AG04449 (cell line): ENCODE measurements at regions of chrX and their contacts with region 1.

Region 1: GRCh38 chrX:118839334-118839958 is 15.8 kb downstream of the ZCCHC12 start:
- DNase-seq: no peak
- H3K4me3 ChIP-seq: peak overlapping the region; percentile 52
- CTCF ChIP-seq: peak; percentile 74

Region 2: DNA sequence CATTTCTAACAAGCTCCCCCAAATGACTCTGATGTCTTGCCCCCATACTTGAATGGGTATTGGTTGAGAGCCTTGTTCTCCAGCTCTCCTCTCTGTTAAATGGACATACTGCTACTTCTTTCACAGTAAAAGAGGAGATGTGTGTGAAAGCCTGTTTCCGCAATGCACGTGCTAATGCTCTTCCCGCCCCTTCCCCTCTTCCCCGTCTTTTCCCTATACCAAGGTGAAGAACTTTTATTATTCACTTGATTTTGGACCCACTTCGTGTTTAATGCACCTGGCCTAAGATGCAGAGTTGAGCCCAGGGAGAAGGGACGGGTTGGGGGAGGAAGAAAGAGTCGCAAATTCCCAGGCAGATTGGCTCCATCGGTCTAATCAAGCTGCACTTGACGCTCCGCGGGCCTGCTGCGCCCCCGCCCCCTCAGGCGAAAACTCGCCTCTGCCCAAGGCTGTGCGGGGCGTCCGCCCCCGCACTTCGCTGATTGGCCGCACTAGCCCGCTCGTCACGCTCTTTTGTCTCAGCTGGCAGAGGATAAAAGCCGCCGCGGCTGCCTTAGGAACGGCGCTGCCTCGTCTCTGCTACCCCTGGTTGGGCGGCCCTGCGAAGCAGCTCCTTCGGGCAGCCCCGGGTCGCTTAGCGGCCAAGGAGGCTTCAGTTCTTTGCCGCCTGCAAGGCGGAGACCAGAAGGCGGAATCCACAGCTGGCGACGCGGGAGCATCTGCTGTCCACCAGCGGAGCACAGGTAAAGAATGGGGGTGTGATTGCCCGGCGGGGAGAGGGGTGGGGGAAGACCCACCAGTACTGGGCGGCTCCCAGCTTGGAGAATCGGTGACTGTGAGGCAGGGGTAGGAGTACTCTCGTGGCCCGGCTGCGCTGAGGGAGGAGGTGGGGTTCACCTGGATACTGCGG is 15.9 kb before region 1 on chrX and contains the start of gene ZCCHC12:
- CTCF ChIA-PET with region 1: interaction called, 20 read pairs
- POLR2A ChIA-PET with region 1: no interaction called
- DNase-seq: no peak
- H3K4me3 ChIP-seq: peak within 1 kb of the TSS; percentile 30
- CTCF ChIP-seq: no peak